T-cell (primary cell): ENCODE measurements at regions of chr2 and their contacts with region 1.

Region 1: DNA sequence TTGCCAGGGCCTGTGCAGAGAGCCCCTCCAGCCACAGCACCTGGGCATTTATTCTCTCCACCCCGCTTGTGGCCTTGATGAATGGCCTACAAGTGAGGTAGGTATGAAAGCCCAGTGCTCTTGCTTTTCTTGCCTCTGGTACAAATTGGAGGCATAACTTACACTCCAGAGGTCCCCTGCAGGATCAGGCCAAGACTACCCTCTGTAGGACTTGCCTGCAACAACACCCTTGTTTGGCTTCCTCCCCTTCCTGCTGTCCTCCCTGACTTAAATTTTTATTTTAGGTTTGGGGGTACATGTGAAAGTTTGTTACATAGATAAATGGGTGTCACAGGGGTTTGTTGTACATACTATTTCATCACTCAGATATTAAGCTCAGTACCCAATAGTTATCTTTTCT is 95.7 kb downstream of the CDC42EP3 start:
- DNase-seq: no peak
- ATAC-seq: no peak
- H3K4me3 ChIP-seq: no peak overlapping the region
- H3K4me3 Mint-ChIP-seq: no peak overlapping the region
- H3K27ac ChIP-seq: no peak overlapping the region
- H3K27ac Mint-ChIP-seq: no peak overlapping the region
- H3K4me1 ChIP-seq: no peaks in the 10 kb centered on the region
- H3K4me1 Mint-ChIP-seq: peaks cover 7 to 9% (median 8%) of the 10 kb centered on the region in 3 donors
- H3K27me3 ChIP-seq: no peaks in the 10 kb centered on the region
- H3K27me3 Mint-ChIP-seq: no peaks in the 10 kb centered on the region

Region 2: DNA sequence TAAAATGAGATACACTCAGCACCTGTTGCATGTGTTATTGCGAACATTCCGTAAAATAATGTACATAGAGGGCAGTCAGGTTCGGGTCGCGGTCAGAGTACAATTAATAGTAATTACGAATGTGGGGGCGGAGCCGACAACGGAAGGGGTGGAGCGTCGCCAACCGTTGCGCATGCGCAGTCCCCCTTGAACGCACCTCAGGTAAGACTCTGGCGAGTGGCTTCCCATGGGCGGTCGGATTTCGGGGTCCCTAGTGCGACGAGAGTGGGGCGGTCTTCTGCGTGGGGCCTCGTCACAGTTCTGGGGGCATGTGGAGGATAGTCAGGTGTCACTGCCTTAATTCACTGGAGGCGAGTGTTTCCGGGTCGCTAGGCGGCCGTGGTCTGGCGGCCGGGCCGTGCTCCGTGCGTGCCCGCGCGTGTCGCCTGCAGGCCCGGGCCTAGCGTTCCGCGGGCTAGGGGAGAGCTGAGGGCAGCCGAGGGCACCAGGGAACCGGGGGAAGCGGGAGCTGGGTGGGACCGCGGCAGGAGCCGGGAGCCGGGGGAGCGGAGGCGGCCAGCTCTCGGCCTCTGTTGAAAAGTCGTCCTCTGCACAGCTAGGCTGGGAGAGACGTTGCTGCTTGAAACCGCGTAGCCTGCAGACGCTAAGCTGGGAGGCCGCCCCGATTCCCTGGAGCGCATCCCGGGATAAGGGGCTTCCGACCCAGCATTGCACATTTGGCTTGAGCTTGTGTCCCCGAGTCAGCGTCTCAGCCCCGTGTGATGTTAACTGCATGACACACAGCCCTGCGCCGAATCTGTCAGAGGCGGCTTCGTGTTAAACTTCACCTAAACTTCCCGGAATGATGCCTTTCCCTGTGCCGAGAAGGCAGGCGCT is 379.2 kb before region 1 on chr2 and contains the start of gene CEBPZOS:
- CTCF ChIA-PET with region 1: no interaction called
- POLR2A ChIA-PET with region 1: interaction called in 1 of 2 experiments, 11 read pairs
- DNase-seq: peak; percentile 70 to 94 (median 84)
- ATAC-seq: peak; percentile 87 to 92 (median 90)
- H3K4me3 ChIP-seq: peak within 1 kb of the TSS; percentile 64 to 87
- H3K4me3 Mint-ChIP-seq: peak within 1 kb of the TSS; percentile 86 to 99 (median 99)
- H3K27ac ChIP-seq: peak within 1 kb of the TSS; percentile 50
- H3K27ac Mint-ChIP-seq: peak within 1 kb of the TSS; percentile 97 to 99
- H3K4me1 ChIP-seq: peaks cover 4 to 29% of the 10 kb centered on the region in 2 experiments
- H3K4me1 Mint-ChIP-seq: peaks cover 36 to 46% (median 38%) of the 10 kb centered on the region in 3 donors
- H3K27me3 ChIP-seq: no peaks in the 10 kb centered on the region
- H3K27me3 Mint-ChIP-seq: no peaks in the 10 kb centered on the region
- total RNA-seq, gene CEBPZOS: 23.9 to 40.1 (median 37.5) TPM

Region 3: GRCh38 chr2:37472959-37473358 is 102.8 kb before region 1 on chr2:
- CTCF ChIA-PET with region 1: no interaction called
- POLR2A ChIA-PET with region 1: no interaction called
- DNase-seq: no peak
- ATAC-seq: no peak
- H3K4me3 ChIP-seq: no peak overlapping the region
- H3K4me3 Mint-ChIP-seq: no peak overlapping the region
- H3K27ac ChIP-seq: no peak overlapping the region
- H3K27ac Mint-ChIP-seq: no peak overlapping the region
- H3K4me1 ChIP-seq: no peaks in the 10 kb centered on the region
- H3K4me1 Mint-ChIP-seq: no peaks in the 10 kb centered on the region
- H3K27me3 ChIP-seq: no peaks in the 10 kb centered on the region
- H3K27me3 Mint-ChIP-seq: peaks cover 0 to 3% of the 10 kb centered on the region in 2 donors